ENCODE measurements at regions of chrX and their contacts with region 1.

Region 1: DNA sequence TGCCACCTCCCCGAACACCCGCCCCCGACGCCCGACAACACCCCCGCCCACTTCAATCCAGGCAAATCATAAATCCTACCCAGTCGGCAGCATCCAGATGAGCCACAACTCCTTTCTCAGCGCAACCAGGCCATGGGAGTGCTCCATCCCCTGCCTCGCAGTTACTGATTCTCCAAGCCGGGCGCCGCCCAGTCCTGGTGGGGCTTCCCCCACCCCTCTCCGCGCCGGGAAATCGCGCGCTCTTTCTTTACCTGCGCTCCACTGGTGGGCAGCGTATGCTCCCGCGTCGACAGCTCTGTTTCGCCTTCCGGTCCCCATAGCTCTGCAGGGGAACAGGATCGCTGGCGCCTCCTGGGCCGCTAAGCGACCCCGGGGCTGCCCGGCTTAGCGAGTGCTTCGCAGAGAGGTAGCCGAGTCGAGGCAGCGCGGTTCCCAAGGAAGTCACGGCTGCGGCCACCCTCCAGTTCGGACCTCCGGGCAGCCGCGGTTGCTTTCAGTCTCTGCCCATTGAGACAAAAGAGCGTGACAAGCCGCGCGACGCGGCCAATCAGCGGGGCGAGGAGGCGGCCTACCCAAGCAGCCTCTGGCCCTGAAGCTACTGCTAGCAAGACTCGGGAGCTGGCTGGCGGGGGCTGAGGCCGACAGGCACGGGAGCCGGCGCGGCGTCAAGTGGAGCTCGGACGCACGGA is 43.7 kb upstream of the TMSB15B start:
- DNase-seq: peak; percentile 19 to 64 (median 61)
- ATAC-seq: peak; percentile 86
- H3K4me3 ChIP-seq: peak overlapping the region; percentile 70
- H3K4me3 Mint-ChIP-seq: peak overlapping the region; percentile 89 to 97 (median 92)
- H3K27ac ChIP-seq: peak overlapping the region; percentile 74
- H3K27ac Mint-ChIP-seq: peak overlapping the region; percentile 79 to 95 (median 89)
- H3K4me1 ChIP-seq: peaks cover 3 to 8% of the 10 kb centered on the region in 2 donors
- H3K4me1 Mint-ChIP-seq: peaks cover 9 to 29% (median 18%) of the 10 kb centered on the region in 7 donors
- H3K27me3 ChIP-seq: no peaks in the 10 kb centered on the region
- H3K27me3 Mint-ChIP-seq: no peaks in the 10 kb centered on the region

Region 2: DNA sequence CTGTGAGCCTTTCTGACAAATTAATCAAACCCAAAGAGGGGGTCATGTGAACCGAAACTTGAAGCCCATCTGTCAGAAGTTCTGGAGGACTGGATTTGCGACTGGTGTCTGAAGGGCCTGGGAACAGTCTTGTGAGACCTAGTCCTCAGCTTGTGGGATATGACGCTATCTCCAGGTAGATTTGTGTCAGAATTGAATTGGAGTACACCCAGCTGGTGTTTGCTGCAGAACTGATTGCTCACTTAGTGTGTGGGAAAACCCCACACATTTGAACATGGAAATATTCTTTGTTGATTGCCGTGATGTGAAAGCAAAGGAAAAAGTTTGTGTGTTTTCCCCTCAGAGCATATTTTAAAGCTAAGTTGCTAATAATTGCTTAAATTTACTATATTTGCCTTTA is 13.4 kb after region 1 on chrX:
- CTCF ChIA-PET with region 1: no interaction called
- POLR2A ChIA-PET with region 1: no interaction called
- intact Hi-C with region 1: loop called in 1 of 2 experiments (anchors 2 kb)
- DNase-seq: no peak
- ATAC-seq: no peak
- H3K4me3 ChIP-seq: no peak overlapping the region
- H3K4me3 Mint-ChIP-seq: no peak overlapping the region
- H3K27ac ChIP-seq: no peak overlapping the region
- H3K27ac Mint-ChIP-seq: no peak overlapping the region
- H3K4me1 ChIP-seq: no peaks in the 10 kb centered on the region
- H3K4me1 Mint-ChIP-seq: peaks cover 0 to 3% (median 0%) of the 10 kb centered on the region in 7 donors
- H3K27me3 ChIP-seq: no peaks in the 10 kb centered on the region
- H3K27me3 Mint-ChIP-seq: no peaks in the 10 kb centered on the region

Region 3: GRCh38 chrX:104113222-104113965 is 194.7 kb after region 1 on chrX:
- CTCF ChIA-PET with region 1: no interaction called
- POLR2A ChIA-PET with region 1: no interaction called
- intact Hi-C with region 1: loop called in 1 of 2 experiments (anchors 5 kb)
- DNase-seq: peak in 8 of 9 donors; percentile 17 to 43 (median 35)
- ATAC-seq: peak; percentile 71
- H3K4me3 ChIP-seq: peak overlapping the region; percentile 79
- H3K4me3 Mint-ChIP-seq: peak overlapping the region; percentile 74 to 93 (median 90)
- H3K27ac ChIP-seq: peak overlapping the region; percentile 67
- H3K27ac Mint-ChIP-seq: peak overlapping the region; percentile 28 to 81 (median 65)
- H3K4me1 ChIP-seq: peaks cover 17 to 25% of the 10 kb centered on the region in 2 donors
- H3K4me1 Mint-ChIP-seq: peaks cover 0 to 35% (median 27%) of the 10 kb centered on the region in 7 donors
- H3K27me3 ChIP-seq: no peaks in the 10 kb centered on the region
- H3K27me3 Mint-ChIP-seq: peaks cover 0 to 8% (median 0%) of the 10 kb centered on the region in 5 donors

Region 4: GRCh38 chrX:104156630-104157529 is 238.2 kb after region 1 on chrX and contains the start of gene SLC25A53:
- CTCF ChIA-PET with region 1: no interaction called
- POLR2A ChIA-PET with region 1: interaction called, 6 read pairs
- intact Hi-C with region 1: loop called (anchors 1 to 2 kb)
- DNase-seq: peak; percentile 53 to 81 (median 71)
- ATAC-seq: peak; percentile 91
- H3K4me3 ChIP-seq: peak within 1 kb of the TSS; percentile 87
- H3K4me3 Mint-ChIP-seq: peak within 1 kb of the TSS; percentile 87 to 100 (median 98)
- H3K27ac ChIP-seq: peak within 1 kb of the TSS; percentile 85
- H3K27ac Mint-ChIP-seq: peak within 1 kb of the TSS; percentile 97 to 100 (median 99)
- H3K4me1 ChIP-seq: no peaks in the 10 kb centered on the region
- H3K4me1 Mint-ChIP-seq: peaks cover 6 to 25% (median 15%) of the 10 kb centered on the region in 7 donors
- H3K27me3 ChIP-seq: no peaks in the 10 kb centered on the region
- H3K27me3 Mint-ChIP-seq: no peaks in the 10 kb centered on the region
- total RNA-seq, gene SLC25A53: 7.2 to 18.9 (median 10.4) TPM

Region 5: DNA sequence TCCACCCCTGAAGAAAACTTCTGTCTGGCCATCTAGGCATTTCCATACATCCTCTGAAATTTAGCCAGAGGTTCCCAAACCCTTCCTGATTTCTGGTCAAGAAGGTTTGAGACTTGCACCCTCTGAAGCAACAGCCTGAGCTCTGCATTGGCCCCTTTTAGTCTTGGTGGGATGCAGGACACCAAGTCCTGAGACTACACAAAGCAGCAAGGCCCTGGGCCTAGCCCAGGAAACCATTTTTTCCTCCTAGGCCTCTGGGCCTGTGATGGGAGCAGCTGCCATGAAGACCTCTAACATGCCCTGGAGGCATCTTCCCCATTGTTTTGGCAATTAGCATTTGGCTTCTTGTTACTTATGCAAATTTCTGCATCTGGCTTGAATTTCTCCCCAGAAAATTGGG is 843.9 kb after region 1 on chrX:
- CTCF ChIA-PET with region 1: no interaction called
- POLR2A ChIA-PET with region 1: no interaction called
- intact Hi-C with region 1: no loop called
- DNase-seq: no peak
- ATAC-seq: no peak
- H3K4me3 ChIP-seq: no peak overlapping the region
- H3K4me3 Mint-ChIP-seq: no peak overlapping the region
- H3K27ac ChIP-seq: no peak overlapping the region
- H3K27ac Mint-ChIP-seq: no peak overlapping the region
- H3K4me1 ChIP-seq: no peaks in the 10 kb centered on the region
- H3K4me1 Mint-ChIP-seq: no peaks in the 10 kb centered on the region
- H3K27me3 ChIP-seq: no peaks in the 10 kb centered on the region
- H3K27me3 Mint-ChIP-seq: peaks cover 0 to 4% (median 0%) of the 10 kb centered on the region in 5 donors